Panc1 (cell line): ENCODE measurements at regions of chr19 and their contacts with region 1.

Region 1: GRCh38 chr19:51338563-51339312 is 3.2 kb downstream of the VSIG10L start:
- DNase-seq: no peak
- ATAC-seq: peak; percentile 87
- H3K4me3 ChIP-seq: peak overlapping the region; percentile 49 to 81
- H3K27ac ChIP-seq: peak overlapping the region; percentile 39
- H3K4me1 ChIP-seq: no peaks in the 10 kb centered on the region
- H3K27me3 ChIP-seq: no peaks in the 10 kb centered on the region
- CTCF ChIP-seq: peak; percentile 89

Region 2: DNA sequence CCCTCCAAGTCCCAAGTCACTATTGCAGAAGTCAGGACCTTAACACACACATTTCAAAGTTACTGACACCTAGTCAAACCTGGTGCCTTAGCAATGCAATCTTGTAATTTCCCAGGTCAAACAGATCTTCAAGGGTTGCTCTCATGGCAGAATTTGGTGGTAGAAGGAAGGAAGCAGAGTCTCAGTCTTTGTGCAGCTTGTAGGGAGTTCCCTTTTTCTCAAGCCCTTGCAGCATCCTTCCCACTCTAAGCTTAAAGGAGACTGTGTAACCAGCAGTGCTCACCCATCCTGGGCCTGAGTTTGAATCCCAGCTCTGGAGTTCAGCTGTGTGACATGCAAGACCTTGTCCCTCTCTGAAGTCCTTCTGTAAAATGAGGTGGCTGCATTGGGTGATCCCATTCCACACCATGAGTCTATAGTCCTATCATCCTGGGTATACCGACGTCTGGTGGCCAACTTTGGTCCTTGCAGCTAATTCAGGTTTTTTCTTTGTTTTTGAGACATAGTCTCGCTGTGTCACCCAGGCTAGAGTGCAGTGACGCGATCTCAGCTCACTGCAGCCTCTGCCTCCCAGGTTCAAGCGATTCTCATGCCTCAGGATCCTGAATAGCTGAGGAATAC is 68.9 kb after region 1 on chr19:
- CTCF ChIA-PET with region 1: no interaction called
- POLR2A ChIA-PET with region 1: no interaction called
- in situ Hi-C with region 1: no loop called
- intact Hi-C with region 1: loop called (anchors 5 kb)
- DNase-seq: no peak
- ATAC-seq: peak; percentile 68
- H3K4me3 ChIP-seq: no peak overlapping the region
- H3K27ac ChIP-seq: no peak overlapping the region
- H3K4me1 ChIP-seq: no peaks in the 10 kb centered on the region; the same call in 1 of the 2 replicates
- H3K27me3 ChIP-seq: no peaks in the 10 kb centered on the region
- CTCF ChIP-seq: peak; percentile 72

Region 3: GRCh38 chr19:51422053-51422448 is 83.3 kb after region 1 on chr19:
- CTCF ChIA-PET with region 1: interaction called, 14 read pairs
- POLR2A ChIA-PET with region 1: no interaction called
- in situ Hi-C with region 1: no loop called
- intact Hi-C with region 1: no loop called
- DNase-seq: no peak
- ATAC-seq: peak; percentile 93
- H3K4me3 ChIP-seq: no peak overlapping the region
- H3K27ac ChIP-seq: no peak overlapping the region
- H3K4me1 ChIP-seq: no peaks in the 10 kb centered on the region
- H3K27me3 ChIP-seq: no peaks in the 10 kb centered on the region
- CTCF ChIP-seq: peak; percentile 92

Region 4: GRCh38 chr19:51651216-51651846 is 312.6 kb after region 1 on chr19:
- CTCF ChIA-PET with region 1: no interaction called
- POLR2A ChIA-PET with region 1: no interaction called
- in situ Hi-C with region 1: no loop called
- intact Hi-C with region 1: loop called (anchors 10 kb)
- DNase-seq: no peak
- ATAC-seq: no peak
- H3K4me3 ChIP-seq: no peak overlapping the region
- H3K27ac ChIP-seq: no peak overlapping the region
- H3K4me1 ChIP-seq: no peaks in the 10 kb centered on the region
- H3K27me3 ChIP-seq: peaks cover 4% of the 10 kb centered on the region
- CTCF ChIP-seq: no peak

Region 5: GRCh38 chr19:52171321-52172169 is 832.8 kb after region 1 on chr19 and contains the start of gene ZNF836:
- CTCF ChIA-PET with region 1: no interaction called
- POLR2A ChIA-PET with region 1: no interaction called
- in situ Hi-C with region 1: no loop called
- intact Hi-C with region 1: no loop called
- DNase-seq: no peak
- ATAC-seq: peak; percentile 97
- H3K4me3 ChIP-seq: peak within 1 kb of the TSS; percentile 93 to 94
- H3K27ac ChIP-seq: peak within 1 kb of the TSS; percentile 70
- H3K4me1 ChIP-seq: no peaks in the 10 kb centered on the region
- H3K27me3 ChIP-seq: no peaks in the 10 kb centered on the region
- CTCF ChIP-seq: no peak
- total RNA-seq, gene ZNF836: 6.3 TPM